Right ventricle myocardium inferior (tissue), 1 donor: ENCODE measurements at regions of chr7 and their contacts with region 1.

Region 1: DNA sequence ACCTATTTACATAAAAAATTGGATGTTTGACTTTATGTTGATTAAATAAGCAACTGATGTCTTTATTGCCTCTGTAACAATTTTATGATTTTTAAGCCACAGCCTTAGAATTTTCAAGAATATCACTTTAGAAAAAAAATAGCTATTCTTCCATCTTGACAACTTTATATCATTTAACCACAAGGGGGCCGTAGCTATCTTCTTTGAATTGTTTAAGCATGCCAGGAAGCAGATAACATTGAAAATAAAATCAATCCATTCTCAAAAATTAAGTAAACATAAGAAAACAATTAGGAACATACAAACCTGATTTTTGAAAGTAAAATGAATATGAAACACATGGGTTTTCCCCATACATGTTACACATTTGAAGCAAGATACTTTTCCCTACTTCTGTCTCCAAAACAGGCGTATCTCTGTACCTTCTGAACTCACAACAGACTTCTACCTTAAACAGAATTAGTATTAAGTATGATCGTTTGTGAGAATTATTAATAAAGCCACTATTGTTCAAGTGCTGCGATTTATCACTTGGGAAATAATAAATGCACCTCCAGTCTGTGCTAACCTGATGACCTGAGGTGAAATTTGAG is 209.0 kb downstream of the CACNA2D1 start:
- DNase-seq: no peak
- ATAC-seq: no peak

Region 2: DNA sequence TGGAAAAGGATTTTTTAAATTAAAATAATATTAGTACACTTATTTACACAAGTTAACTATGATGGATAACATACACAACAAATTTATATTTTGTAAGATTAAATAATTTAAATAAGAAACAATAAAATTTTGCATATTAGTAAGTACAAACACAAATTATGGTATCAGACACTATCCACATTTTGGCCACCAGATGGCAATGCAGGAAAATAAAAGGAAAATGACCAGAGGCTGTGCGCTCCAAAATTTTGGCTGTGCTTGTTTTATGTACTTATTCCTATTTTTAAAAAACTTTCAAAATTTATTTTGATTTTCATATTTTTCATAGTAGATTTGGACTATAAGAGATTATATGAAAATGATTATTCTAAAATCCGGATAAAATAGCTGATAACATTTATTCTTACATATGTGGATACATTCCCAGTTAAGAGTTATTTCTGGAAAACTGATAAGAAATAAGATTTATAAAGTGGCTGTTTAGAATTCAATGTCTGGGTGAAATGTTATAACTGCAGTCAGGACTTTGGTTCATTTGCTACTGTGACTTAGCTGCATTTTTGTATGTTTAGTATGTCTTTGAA is 190.0 kb before region 1 on chr7:
- intact Hi-C with region 1: loop called (anchors 5 kb)
- DNase-seq: no peak
- ATAC-seq: no peak

Region 3: GRCh38 chr7:82443547-82444219 is 209.1 kb after region 1 on chr7 and contains the start of gene CACNA2D1:
- intact Hi-C with region 1: loop called (anchors 2 kb)
- DNase-seq: peak; percentile 89
- ATAC-seq: peak; percentile 97
- total RNA-seq, gene CACNA2D1: 46.1 TPM

Region 4: GRCh38 chr7:82481499-82482097 is 247.0 kb after region 1 on chr7:
- intact Hi-C with region 1: loop called (anchors 1 kb)
- DNase-seq: no peak
- ATAC-seq: no peak

Region 5: DNA sequence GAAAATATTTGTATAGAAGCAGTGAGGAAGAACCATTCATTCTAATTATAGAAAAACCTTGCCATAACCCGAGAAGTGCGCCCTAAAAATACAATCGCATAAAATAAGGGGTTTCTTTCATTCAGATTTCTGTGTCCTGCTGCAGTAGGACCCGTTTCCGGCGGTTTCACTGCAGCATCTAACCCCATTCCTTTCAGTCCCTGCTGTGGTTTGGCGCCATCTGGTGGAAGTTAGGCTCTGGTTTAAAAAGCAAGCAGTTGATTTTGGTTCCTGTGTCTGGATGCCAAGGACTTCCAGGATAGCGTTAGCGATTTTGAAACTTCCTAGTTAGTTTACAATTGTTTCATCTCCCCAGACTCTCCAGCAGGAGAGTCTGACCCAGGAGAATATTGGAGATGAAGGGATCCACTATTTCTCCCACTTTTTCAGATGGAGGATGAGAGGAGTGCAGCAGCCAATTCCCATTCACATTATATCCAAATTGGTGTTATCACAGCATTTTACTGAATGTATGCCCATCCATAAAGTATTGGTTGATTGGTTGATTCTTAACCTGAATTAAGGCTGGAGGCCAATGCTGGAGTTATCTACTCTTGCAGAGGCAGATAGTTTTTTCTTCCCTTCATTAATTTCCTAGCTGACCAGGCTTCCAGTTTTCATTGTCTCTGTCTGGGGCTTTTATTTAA is 337.8 kb after region 1 on chr7:
- intact Hi-C with region 1: loop called (anchors 5 kb)
- DNase-seq: peak; percentile 77
- ATAC-seq: peak; percentile 83